Posterior vena cava (tissue), 2 donors: ENCODE measurements at regions of chr1 and their contacts with region 1.

Region 1: GRCh38 chr1:117137316-117137855 is 15.8 kb upstream of the TRIM45 start:
- DNase-seq: no peak

Region 2: GRCh38 chr1:115476616-115477015 is 1660.8 kb before region 1 on chr1:
- intact Hi-C with region 1: loop called in 1 of 2 experiments (anchors 10 kb)
- DNase-seq: no peak